Activated T-helper 2 cell treated with anti-CD3 and anti-CD28 coated beads, Interferon-gamma antibody, Interleukin-2, Interleukin-4, amounts not matched to agents 10 μg/mL and 5 μg/mL and 100 μg/mL, durations not matched to agents 14 hours and 24 hours and 36 hours (primary cell): ENCODE measurements at regions of chr13 and their contacts with region 1.

Region 1: GRCh38 chr13:102800145-102801041 is 1.5 kb downstream of the BIVM start:
- DNase-seq: peak; percentile 82
- H3K4me3 Mint-ChIP-seq: peak overlapping the region; percentile 95
- H3K27ac Mint-ChIP-seq: peak overlapping the region; percentile 89
- H3K4me1 Mint-ChIP-seq: peaks cover 41% of the 10 kb centered on the region
- H3K27me3 Mint-ChIP-seq: no peaks in the 10 kb centered on the region

Region 2: GRCh38 chr13:102680842-102681740 is 119.3 kb before region 1 on chr13:
- intact Hi-C with region 1: loop called (anchors 5 kb)
- DNase-seq: no peak
- H3K4me3 Mint-ChIP-seq: no peak overlapping the region
- H3K27ac Mint-ChIP-seq: peak overlapping the region; percentile 23
- H3K4me1 Mint-ChIP-seq: peaks cover 31% of the 10 kb centered on the region
- H3K27me3 Mint-ChIP-seq: no peaks in the 10 kb centered on the region

Region 3: DNA sequence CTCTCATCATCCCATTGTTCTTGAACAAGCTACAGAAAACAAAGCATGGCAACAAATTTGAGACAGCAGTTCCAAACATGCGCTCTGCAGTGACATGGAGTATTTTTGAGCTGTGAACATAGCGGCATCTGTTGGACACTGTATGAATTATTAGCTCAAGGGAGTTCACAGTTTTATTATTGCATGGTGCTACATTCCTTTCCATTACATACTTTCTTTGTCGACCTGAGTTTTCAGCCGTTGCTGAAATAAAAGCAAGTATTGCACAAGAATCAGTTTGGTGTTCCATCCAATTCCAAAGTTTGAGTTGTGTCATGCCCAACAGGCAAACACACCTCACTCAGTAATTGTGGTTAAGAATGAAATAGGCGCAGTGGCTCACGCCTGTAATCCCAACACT is 75.5 kb before region 1 on chr13:
- intact Hi-C with region 1: loop called (anchors 2 kb)
- DNase-seq: no peak
- H3K4me3 Mint-ChIP-seq: no peak overlapping the region
- H3K27ac Mint-ChIP-seq: no peak overlapping the region
- H3K4me1 Mint-ChIP-seq: peaks cover 8% of the 10 kb centered on the region
- H3K27me3 Mint-ChIP-seq: peaks cover 27% of the 10 kb centered on the region

Region 4: DNA sequence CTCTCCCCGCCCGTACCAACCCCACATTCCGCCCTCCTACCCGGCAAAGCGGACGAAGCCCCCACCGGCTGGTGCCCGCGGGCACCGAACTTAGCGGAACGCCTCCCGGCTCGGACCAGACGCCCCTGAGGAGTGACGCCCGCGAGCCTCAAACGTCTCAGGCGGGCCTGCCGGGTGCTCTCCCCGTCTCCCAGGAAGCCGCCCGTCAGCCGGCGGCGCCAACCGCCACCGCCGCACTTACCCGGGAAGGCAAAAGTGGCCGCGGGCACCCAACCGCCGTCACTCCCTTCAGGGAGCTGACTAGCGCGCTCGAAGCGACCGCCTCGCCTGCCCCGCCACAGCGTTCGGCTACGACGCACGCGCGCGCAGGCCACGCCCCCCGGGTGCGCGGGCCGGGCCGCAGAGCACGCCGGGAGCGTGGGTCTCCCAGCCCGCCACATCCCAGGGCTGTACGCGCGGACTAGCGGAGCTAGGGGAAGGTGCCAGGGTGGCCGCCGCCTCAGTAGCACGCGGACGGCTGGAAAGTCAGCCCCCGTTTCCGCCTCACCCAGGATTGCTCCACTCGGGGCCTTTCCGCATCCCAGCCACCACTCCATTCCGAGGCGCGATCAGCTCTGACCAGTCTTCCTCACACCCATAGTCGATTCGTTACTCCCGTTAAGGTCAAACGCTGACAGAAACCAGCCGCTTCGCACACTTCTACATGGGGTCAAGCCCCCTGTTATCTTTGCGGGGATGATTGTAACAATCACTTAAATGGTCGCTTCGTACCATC is 26.8 kb before region 1 on chr13 and contains the start of gene TEX30:
- intact Hi-C with region 1: loop called (anchors 1 kb)
- DNase-seq: peak; percentile 86
- H3K4me3 Mint-ChIP-seq: peak within 1 kb of the TSS; percentile 95
- H3K27ac Mint-ChIP-seq: peak within 1 kb of the TSS; percentile 93
- H3K4me1 Mint-ChIP-seq: peaks cover 53% of the 10 kb centered on the region
- H3K27me3 Mint-ChIP-seq: no peaks in the 10 kb centered on the region
- total RNA-seq, gene TEX30: 54.8 and 58.9 TPM in 2 replicates

Region 5: GRCh38 chr13:102779436-102780159 is 20.8 kb before region 1 on chr13:
- intact Hi-C with region 1: loop called (anchors 1 kb)
- DNase-seq: peak; percentile 55
- H3K4me3 Mint-ChIP-seq: peak overlapping the region; percentile 50
- H3K27ac Mint-ChIP-seq: peak overlapping the region; percentile 98
- H3K4me1 Mint-ChIP-seq: peaks cover 36% of the 10 kb centered on the region
- H3K27me3 Mint-ChIP-seq: no peaks in the 10 kb centered on the region